MCF 10A (cell line): ENCODE measurements at regions of chr20 and their contacts with region 1.

Region 1: DNA sequence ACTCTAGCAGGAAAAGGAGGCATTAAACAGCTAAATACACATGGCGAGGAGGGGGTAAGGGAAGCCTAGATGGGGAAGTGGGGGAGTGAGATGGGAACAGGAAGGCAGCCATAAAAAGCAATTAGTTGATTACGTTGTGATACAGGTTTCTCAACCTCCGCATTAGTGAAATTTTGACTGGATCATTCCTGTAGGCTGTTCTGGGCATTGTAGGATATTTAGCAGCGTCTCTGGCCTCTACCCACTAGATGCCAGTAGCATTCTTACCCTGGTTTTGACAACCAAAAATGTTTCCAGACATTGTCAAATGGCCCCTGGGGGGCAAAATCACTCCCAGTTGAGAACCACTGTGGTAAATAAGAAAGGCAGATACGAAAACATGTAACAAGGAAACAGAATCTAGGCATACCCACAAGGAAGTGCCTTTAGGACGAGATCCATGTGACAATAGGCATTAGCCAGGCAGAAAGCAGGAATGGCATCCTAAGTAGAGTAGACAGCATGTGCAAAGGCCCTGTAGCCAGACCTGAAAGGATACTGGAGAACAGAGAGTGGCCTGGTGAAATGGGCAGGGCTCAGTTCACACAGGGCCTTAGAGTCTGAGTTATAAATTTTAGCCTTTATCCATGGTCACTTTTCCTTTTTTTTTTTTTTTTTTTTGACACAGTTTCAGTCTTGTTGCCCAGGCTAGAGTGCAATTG is 25.8 kb upstream of the PTPN1 start:
- DNase-seq: peak; percentile 30
- H3K4me3 Mint-ChIP-seq: peak overlapping the region; percentile 75
- H3K27ac Mint-ChIP-seq: peak overlapping the region; percentile 90
- H3K4me1 Mint-ChIP-seq: peaks cover 12% of the 10 kb centered on the region
- H3K27me3 Mint-ChIP-seq: no peaks in the 10 kb centered on the region
- CTCF ChIP-seq: peak; percentile 29

Region 2: DNA sequence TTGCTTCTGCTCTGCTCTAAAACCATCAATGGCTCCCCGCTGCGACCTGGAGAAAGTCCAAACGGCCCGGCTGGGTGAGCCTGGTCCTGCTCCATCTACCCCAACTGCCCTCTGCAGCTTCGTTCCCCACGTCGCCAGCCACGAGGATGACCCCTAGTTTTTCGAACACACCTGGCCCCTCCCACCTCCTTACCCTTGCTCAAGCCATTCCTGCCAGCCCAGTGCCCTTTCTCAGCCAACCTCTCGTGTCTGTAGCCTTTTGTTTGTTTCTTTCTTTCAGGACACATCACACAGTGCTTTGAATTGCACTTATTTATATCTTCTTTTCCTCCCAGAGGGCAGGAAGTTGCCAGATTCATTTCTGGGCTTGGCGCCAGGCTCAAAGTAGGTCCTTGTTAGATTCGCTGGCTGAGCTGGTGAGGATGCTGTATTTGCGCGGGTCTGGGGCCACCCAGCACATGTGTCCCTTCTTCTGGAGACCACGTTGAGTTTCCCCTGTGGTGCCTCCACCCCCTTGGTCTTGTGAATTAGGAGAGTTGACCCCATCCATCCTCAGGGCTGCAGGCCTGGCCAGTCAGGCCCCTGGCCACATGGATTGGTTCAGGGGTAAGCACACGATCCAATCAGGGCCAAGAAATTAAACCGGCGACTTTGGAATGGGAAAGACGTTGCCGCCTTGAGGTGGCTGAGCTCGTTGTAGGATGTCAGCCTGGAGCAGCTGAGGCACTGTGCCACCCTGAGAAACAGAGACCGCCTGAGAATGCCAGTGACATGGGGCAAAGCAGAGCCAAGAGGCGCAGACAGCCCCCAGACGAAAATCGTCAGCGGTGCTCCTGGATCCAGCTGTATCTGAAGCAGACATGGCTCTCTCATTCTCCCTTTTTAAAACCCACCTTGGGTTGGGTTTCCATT is 137.8 kb before region 1 on chr20:
- CTCF ChIA-PET with region 1: no interaction called
- POLR2A ChIA-PET with region 1: no interaction called
- intact Hi-C with region 1: no loop called
- DNase-seq: peak; percentile 94
- H3K4me3 Mint-ChIP-seq: no peak overlapping the region
- H3K27ac Mint-ChIP-seq: peak overlapping the region; percentile 88
- H3K4me1 Mint-ChIP-seq: peaks cover 10% of the 10 kb centered on the region
- H3K27me3 Mint-ChIP-seq: no peaks in the 10 kb centered on the region
- CTCF ChIP-seq: no peak

Region 3: GRCh38 chr20:50498081-50498776 is 13.8 kb after region 1 on chr20:
- CTCF ChIA-PET with region 1: interaction called, 4 read pairs
- POLR2A ChIA-PET with region 1: interaction called, 85 read pairs
- intact Hi-C with region 1: no loop called
- DNase-seq: peak; percentile 50
- H3K4me3 Mint-ChIP-seq: no peak overlapping the region
- H3K27ac Mint-ChIP-seq: peak overlapping the region; percentile 67
- H3K4me1 Mint-ChIP-seq: peaks cover 42% of the 10 kb centered on the region
- H3K27me3 Mint-ChIP-seq: no peaks in the 10 kb centered on the region
- CTCF ChIP-seq: no peak

Region 4: GRCh38 chr20:50504231-50504823 is 19.9 kb after region 1 on chr20:
- CTCF ChIA-PET with region 1: interaction called, 4 read pairs
- POLR2A ChIA-PET with region 1: interaction called, 480 read pairs
- intact Hi-C with region 1: no loop called
- DNase-seq: no peak
- H3K4me3 Mint-ChIP-seq: no peak overlapping the region
- H3K27ac Mint-ChIP-seq: peak overlapping the region; percentile 88
- H3K4me1 Mint-ChIP-seq: peaks cover 27% of the 10 kb centered on the region
- H3K27me3 Mint-ChIP-seq: no peaks in the 10 kb centered on the region
- CTCF ChIP-seq: no peak

Region 5: DNA sequence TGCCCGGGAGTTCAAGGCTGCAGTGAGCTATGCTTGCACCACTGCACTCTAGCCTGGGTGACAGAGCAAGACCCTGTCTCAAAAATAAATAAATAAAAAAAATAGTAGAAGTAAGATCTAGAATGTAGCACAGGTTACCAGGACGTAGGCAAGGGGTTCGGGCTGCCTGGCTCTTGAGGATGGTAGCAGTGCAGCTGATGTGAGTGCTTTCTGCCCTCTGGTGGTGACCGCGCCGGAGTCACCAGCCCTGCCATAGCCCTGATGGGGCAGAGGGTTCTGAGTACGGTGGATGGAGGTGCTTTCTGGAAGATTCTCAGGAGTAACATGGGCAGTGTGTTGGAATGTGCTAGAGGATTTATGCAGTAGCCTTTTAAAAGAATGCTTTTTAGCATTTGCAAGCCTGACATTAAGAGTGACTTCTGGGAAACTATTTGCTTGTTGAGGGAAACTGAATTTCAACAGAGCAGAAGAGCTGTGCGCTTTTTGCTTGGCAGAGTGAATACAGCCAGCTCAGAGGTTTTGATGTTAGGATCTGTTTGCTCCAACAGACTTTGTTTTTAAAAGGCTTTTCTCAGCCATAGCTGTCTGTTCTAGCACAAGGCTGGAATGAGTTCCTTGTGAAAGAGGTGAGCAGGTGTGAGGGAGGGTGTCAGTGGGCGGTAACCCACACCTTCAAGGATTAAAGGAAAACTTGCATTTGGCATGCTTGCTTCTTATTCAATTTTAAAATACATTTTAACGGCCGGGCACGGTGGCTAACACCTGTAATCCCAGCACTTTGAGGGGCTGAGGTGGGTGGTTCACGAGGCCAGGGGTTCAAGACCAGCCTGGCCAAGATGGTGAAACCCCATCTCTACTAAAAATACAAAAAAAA is 91.7 kb after region 1 on chr20:
- CTCF ChIA-PET with region 1: interaction called, 36 read pairs
- POLR2A ChIA-PET with region 1: interaction called, 8 read pairs
- intact Hi-C with region 1: loop called (anchors 1 kb)
- DNase-seq: peak; percentile 63
- H3K4me3 Mint-ChIP-seq: no peak overlapping the region
- H3K27ac Mint-ChIP-seq: no peak overlapping the region
- H3K4me1 Mint-ChIP-seq: peaks cover 21% of the 10 kb centered on the region
- H3K27me3 Mint-ChIP-seq: no peaks in the 10 kb centered on the region
- CTCF ChIP-seq: peak; percentile 56